ENCODE measurements at regions of chr18 and their contacts with region 1.

Region 1: GRCh38 chr18:40447820-40448219 is 1507.2 kb upstream of the PIK3C3 start:
- DNase-seq: no peak
- H3K4me3 ChIP-seq: no peak overlapping the region
- H3K27ac ChIP-seq: no peak overlapping the region
- H3K4me1 ChIP-seq: no peaks in the 10 kb centered on the region
- H3K27me3 ChIP-seq: no peaks in the 10 kb centered on the region
- CTCF ChIP-seq: no peak
- POLR2A ChIP-seq: no peak

Region 2: GRCh38 chr18:40404284-40404683 is 43.5 kb before region 1 on chr18:
- intact Hi-C with region 1: loop called (anchors 2 kb)
- DNase-seq: no peak
- H3K4me3 ChIP-seq: no peak overlapping the region
- H3K27ac ChIP-seq: no peak overlapping the region
- H3K4me1 ChIP-seq: no peaks in the 10 kb centered on the region
- H3K27me3 ChIP-seq: no peaks in the 10 kb centered on the region
- CTCF ChIP-seq: no peak
- POLR2A ChIP-seq: no peak

Region 3: GRCh38 chr18:40501026-40501425 is 53.2 kb after region 1 on chr18:
- intact Hi-C with region 1: no loop called
- DNase-seq: no peak
- H3K4me3 ChIP-seq: no peak overlapping the region
- H3K27ac ChIP-seq: no peak overlapping the region
- H3K4me1 ChIP-seq: no peaks in the 10 kb centered on the region
- H3K27me3 ChIP-seq: no peaks in the 10 kb centered on the region
- CTCF ChIP-seq: no peak
- POLR2A ChIP-seq: no peak

Region 4: DNA sequence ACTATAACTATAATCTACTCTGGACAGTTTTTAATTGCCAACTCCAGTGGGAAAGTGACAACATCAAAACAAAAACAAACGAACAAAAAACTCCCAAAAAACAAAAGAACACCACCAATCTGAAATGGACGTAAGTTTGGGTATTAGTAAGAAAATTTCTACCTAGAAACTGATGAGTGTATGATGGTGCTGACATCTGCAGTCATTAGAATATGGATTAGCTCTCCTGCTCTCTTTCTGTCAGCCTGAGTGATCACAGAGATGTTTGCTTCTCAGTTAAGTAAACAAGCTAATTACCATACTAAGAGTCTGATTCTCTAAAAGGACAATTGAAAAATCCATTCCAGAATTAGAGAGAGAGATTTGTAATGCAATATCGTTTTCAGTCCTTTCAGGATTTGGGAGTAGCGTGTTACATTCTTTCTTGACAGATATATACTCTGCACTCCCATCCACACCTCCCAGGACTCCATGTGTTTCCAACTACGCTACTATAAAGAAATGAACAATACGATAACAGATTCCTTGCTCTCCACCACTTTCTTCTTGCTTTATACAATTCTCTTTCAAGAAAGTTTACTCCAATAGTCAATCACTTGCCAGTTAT is 159.8 kb after region 1 on chr18:
- intact Hi-C with region 1: no loop called
- DNase-seq: no peak
- H3K4me3 ChIP-seq: no peak overlapping the region
- H3K27ac ChIP-seq: no peak overlapping the region
- H3K4me1 ChIP-seq: no peaks in the 10 kb centered on the region
- H3K27me3 ChIP-seq: no peaks in the 10 kb centered on the region
- CTCF ChIP-seq: no peak
- POLR2A ChIP-seq: no peak

Measured in vagina (tissue), 2 donors.